ENCODE measurements at regions of chr2 and their contacts with region 1.

Region 1: GRCh38 chr2:64750817-64751285 is 97.1 kb upstream of the SERTAD2 start:
- DNase-seq: peak; percentile 94 to 100 (median 99)
- H3K4me3 ChIP-seq: peak overlapping the region; percentile 59 to 97 (median 86)
- H3K27ac ChIP-seq: peak overlapping the region; percentile 89 to 100 (median 99)
- H3K27me3 ChIP-seq: no peaks in the 10 kb centered on the region
- CTCF ChIP-seq: peak in 27 of 56 donors; percentile 1 to 54 (median 33)

Region 2: GRCh38 chr2:64523666-64524603 is 226.9 kb before region 1 on chr2 and contains the start of gene AFTPH:
- intact Hi-C with region 1: loop called in 1 of 2 experiments (anchors 5 kb)
- DNase-seq: peak; percentile 97 to 99 (median 98)
- H3K4me3 ChIP-seq: peak within 1 kb of the TSS; percentile 64 to 99 (median 92)
- H3K27ac ChIP-seq: peak within 1 kb of the TSS; percentile 79 to 98 (median 94)
- H3K27me3 ChIP-seq: no peaks in the 10 kb centered on the region
- CTCF ChIP-seq: peak in 42 of 56 donors; percentile 5 to 61 (median 30)
- total RNA-seq, gene AFTPH: 26.7 to 61.2 (median 44.9) TPM

Region 3: DNA sequence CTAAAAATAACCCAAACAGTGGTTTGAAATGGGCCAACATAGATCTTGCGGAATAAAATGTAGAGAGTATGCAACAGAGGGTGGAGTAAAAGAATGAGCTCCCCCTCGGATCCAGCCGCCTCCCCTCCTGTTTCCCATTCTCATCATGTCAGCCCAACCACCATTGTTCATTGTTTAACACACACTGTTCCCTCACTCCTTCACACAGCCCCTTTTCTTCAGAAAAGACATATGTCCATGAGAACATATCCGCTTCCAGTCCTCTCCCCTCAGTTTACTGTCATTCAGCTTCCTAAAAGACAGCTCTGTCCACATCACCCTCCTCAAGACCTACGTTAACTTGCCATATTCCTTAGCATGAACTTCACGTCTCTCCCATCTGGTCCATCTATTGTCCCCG is 34.3 kb before region 1 on chr2:
- intact Hi-C with region 1: loop called in 1 of 2 experiments (anchors 5 kb)
- DNase-seq: peak in 4 of 10 donors; percentile 16 to 64 (median 54)
- H3K4me3 ChIP-seq: peak overlapping the region in 45 of 59 donors; percentile 0 to 51 (median 21)
- H3K27ac ChIP-seq: peak overlapping the region in 58 of 59 donors; percentile 11 to 89 (median 74)
- H3K27me3 ChIP-seq: no peaks in the 10 kb centered on the region
- CTCF ChIP-seq: peak in 3 of 56 donors; percentile 8 to 13 (median 13)

Region 4: DNA sequence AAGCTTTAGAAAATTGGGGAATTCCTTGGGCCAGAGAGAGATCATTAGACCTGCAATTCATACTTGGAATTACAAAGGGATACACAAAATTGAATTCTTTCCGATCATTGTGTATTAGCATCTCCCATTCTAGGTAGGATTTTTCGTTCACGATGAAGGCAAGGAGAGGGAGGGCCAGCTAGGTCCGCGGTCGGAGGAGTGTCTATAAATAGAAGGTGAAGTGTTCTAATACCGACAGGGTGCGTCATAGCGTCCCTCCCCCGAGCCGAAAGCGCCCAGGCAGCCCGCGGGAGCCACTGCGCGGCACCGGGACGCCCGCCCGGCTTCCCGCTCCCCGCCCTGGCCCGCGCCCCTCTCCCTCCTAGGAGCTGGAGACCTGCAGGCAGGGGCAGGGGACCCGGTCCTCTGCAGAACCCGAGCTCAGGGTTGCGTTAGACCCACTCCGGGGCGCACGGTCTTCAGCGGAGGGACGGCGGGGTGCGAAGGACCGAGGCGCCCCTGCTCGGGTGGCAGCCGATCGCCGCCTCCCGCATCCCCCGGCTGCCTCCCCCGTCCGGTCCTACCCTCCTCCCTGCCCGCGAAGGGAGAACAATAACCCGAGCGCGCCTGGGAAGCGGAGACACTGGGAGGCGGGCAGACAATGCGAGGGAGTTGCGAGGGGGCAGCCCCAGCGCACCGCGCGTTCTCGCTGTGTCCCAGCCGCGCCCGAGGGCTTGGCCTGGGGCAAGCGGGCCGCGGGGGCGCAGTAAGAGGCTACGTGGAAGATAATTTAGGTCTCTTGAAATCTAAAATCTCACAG is 17.0 kb after region 1 on chr2:
- intact Hi-C with region 1: loop called (anchors 1 kb)
- DNase-seq: peak; percentile 72 to 92 (median 88)
- H3K4me3 ChIP-seq: peak overlapping the region; percentile 56 to 92 (median 81)
- H3K27ac ChIP-seq: peak overlapping the region; percentile 92 to 100 (median 99)
- H3K27me3 ChIP-seq: no peaks in the 10 kb centered on the region
- CTCF ChIP-seq: peak in 42 of 56 donors; percentile 4 to 63 (median 26)

Region 5: GRCh38 chr2:64865073-64865830 is 114.4 kb after region 1 on chr2:
- intact Hi-C with region 1: loop called (anchors 1 to 2 kb)
- DNase-seq: peak in 9 of 10 donors; percentile 51 to 77 (median 64)
- H3K4me3 ChIP-seq: peak overlapping the region; percentile 49 to 89 (median 79)
- H3K27ac ChIP-seq: peak overlapping the region; percentile 4 to 98 (median 91)
- H3K27me3 ChIP-seq: no peaks in the 10 kb centered on the region
- CTCF ChIP-seq: peak in 55 of 56 donors; percentile 20 to 100 (median 74)

Region 6: GRCh38 chr2:64945973-64946768 is 195.3 kb after region 1 on chr2:
- intact Hi-C with region 1: no loop called
- DNase-seq: peak in 1 of 10 donors; percentile 49
- H3K4me3 ChIP-seq: no peak overlapping the region
- H3K27ac ChIP-seq: no peak overlapping the region
- H3K27me3 ChIP-seq: no peaks in the 10 kb centered on the region
- CTCF ChIP-seq: no peak

Region 7: DNA sequence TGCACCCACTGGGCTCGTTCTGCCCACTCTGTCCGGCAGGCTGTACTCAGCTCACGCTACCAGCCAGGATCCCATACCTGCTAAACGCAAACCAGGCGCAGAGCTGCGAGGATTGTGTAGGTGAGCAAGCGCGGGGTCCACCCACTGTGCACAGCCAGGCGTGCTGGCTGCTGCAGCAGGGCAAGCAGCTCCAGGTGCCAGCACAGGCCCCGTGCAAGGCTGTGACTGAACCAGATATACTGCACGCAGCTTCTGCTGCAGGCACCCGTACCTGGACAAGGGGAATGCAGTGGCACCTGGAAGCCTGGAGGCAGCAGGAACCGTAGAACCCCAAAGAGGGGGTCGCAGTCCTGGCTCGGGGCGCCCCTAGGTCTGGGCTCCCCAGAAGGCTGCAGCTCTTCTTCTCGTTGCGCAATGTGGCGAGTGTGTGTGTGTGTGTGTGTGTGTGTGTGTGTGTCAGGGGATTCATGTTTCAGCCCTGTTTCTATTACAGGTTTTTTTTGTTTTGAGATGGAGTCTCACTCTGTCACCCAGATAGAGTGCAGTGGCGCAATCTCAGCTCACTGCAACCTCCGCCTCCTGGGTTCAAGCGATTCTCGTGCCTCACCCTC is 425.2 kb after region 1 on chr2:
- intact Hi-C with region 1: no loop called
- DNase-seq: no peak
- H3K4me3 ChIP-seq: no peak overlapping the region
- H3K27ac ChIP-seq: no peak overlapping the region
- H3K27me3 ChIP-seq: no peaks in the 10 kb centered on the region
- CTCF ChIP-seq: no peak

Region 8: GRCh38 chr2:65186872-65187851 is 436.3 kb after region 1 on chr2:
- intact Hi-C with region 1: no loop called
- DNase-seq: peak; percentile 59 to 84 (median 80)
- H3K4me3 ChIP-seq: peak overlapping the region in 16 of 59 donors; percentile 1 to 36 (median 14)
- H3K27ac ChIP-seq: peak overlapping the region in 7 of 59 donors; percentile 3 to 67 (median 46)
- H3K27me3 ChIP-seq: no peaks in the 10 kb centered on the region
- CTCF ChIP-seq: peak; percentile 49 to 93 (median 82)

Measured in dorsolateral prefrontal cortex (tissue), 120 donors.